ENCODE measurements at regions of chr18 and their contacts with region 1.

Region 1: GRCh38 chr18:74495581-74496507 is at the start of gene CNDP2:
- DNase-seq: peak; percentile 99
- H3K4me3 ChIP-seq: peak within 1 kb of the TSS; percentile 52 to 89 (median 74)
- H3K27ac ChIP-seq: peak within 1 kb of the TSS; percentile 59
- H3K4me1 ChIP-seq: peaks cover 11% of the 10 kb centered on the region
- H3K27me3 ChIP-seq: peaks cover 12 to 20% of the 10 kb centered on the region in 2 experiments
- CTCF ChIP-seq: no peak
- POLR2A ChIP-seq: peak; percentile 45
- total RNA-seq, gene CNDP2: 121 and 123 TPM in 2 replicates

Region 2: GRCh38 chr18:74147779-74148542 is 347.9 kb before region 1 on chr18 and contains the starts of genes FBXO15 and TIMM21:
- CTCF ChIA-PET with region 1: no interaction called
- POLR2A ChIA-PET with region 1: no interaction called
- dilution Hi-C with region 1: no loop called
- intact Hi-C with region 1: loop called (anchors 1 kb)
- DNase-seq: peak; percentile 99
- H3K4me3 ChIP-seq: peak within 1 kb of the TSS; percentile 79 to 95 (median 85)
- H3K27ac ChIP-seq: peak within 1 kb of the TSS; percentile 47
- H3K4me1 ChIP-seq: peaks cover 17% of the 10 kb centered on the region
- H3K27me3 ChIP-seq: no peaks in the 10 kb centered on the region
- CTCF ChIP-seq: no peak
- POLR2A ChIP-seq: peak; percentile 81
- total RNA-seq, gene FBXO15: not detected in 2 replicates
- total RNA-seq, gene TIMM21: 36.7 and 38.9 TPM in 2 replicates

Region 3: GRCh38 chr18:74291771-74292540 is 203.9 kb before region 1 on chr18 and contains the start of gene CYB5A:
- CTCF ChIA-PET with region 1: no interaction called
- POLR2A ChIA-PET with region 1: no interaction called
- dilution Hi-C with region 1: no loop called
- intact Hi-C with region 1: loop called (anchors 1 kb)
- DNase-seq: peak; percentile 97
- H3K4me3 ChIP-seq: peak within 1 kb of the TSS; percentile 61 to 79 (median 62)
- H3K27ac ChIP-seq: no peak within 1 kb of the TSS
- H3K4me1 ChIP-seq: peaks cover 6% of the 10 kb centered on the region
- H3K27me3 ChIP-seq: no peaks in the 10 kb centered on the region
- CTCF ChIP-seq: peak in 1 of 2 donors; percentile 8
- POLR2A ChIP-seq: no peak
- total RNA-seq, gene CYB5A: 24.9 and 32.2 TPM in 2 replicates

Region 4: GRCh38 chr18:74353169-74353775 is 142.6 kb before region 1 on chr18:
- CTCF ChIA-PET with region 1: interaction called, 84 read pairs
- POLR2A ChIA-PET with region 1: no interaction called
- dilution Hi-C with region 1: no loop called
- intact Hi-C with region 1: loop called (anchors 1 kb)
- DNase-seq: peak; percentile 53
- H3K4me3 ChIP-seq: no peak overlapping the region
- H3K27ac ChIP-seq: no peak overlapping the region
- H3K4me1 ChIP-seq: no peaks in the 10 kb centered on the region
- H3K27me3 ChIP-seq: peaks cover 1 to 15% of the 10 kb centered on the region in 2 experiments
- CTCF ChIP-seq: peak; percentile 40 to 62
- POLR2A ChIP-seq: no peak

Region 5: DNA sequence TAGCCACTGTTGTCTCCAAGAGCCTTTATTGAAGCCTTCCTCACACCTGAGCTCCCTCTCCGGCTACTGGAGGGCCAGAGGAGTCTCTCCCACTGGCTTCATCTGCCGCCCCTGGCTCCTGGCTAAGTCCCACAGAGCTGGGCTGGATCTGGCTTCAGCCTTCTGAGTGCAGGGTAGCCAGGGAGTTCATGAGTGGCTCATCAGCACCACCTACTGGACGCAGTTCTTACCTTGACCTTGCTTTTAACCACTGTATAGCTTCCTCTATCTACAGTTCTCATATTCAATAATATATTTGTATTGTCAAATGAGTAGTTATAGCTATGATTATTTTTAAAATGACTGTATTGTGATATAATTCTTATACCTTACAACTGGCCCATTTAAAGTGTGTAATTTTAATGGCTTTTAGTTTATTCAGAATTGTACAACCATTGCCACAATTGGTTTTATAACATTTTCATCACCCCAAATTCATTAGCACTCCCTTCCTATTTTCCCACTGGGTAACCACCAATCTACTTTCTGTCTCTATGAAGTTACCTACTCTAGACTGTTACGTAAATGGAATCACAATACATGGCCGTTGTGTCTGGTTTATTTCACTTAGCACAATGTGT is 56.2 kb after region 1 on chr18:
- CTCF ChIA-PET with region 1: interaction called, 12 read pairs
- POLR2A ChIA-PET with region 1: no interaction called
- dilution Hi-C with region 1: no loop called
- intact Hi-C with region 1: no loop called
- DNase-seq: peak; percentile 77
- H3K4me3 ChIP-seq: no peak overlapping the region
- H3K27ac ChIP-seq: no peak overlapping the region
- H3K4me1 ChIP-seq: no peaks in the 10 kb centered on the region
- H3K27me3 ChIP-seq: peaks cover 0 to 4% of the 10 kb centered on the region in 2 experiments
- CTCF ChIP-seq: peak; percentile 70 to 83
- POLR2A ChIP-seq: no peak

Region 6: DNA sequence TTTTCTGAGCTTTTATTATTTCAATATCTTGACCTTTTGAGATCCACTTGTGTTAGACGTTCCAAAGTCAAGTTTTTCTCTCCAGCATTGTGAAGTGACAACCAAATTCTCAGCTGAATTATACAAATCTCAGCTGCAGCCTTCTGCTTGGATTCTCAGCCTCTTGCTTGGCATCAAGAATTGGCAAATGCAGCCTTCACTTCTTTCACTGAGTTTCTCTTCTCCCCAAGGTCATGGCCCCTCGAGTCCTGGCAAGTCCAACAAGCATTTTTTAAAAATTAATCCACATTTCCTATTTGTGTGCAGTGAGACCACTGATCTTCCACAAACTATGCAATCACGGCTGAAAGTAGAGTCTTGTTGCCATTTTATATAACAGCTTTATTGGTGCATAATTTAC is 955.1 kb after region 1 on chr18:
- CTCF ChIA-PET with region 1: no interaction called
- POLR2A ChIA-PET with region 1: no interaction called
- dilution Hi-C with region 1: no loop called
- intact Hi-C with region 1: no loop called
- DNase-seq: no peak
- H3K4me3 ChIP-seq: no peak overlapping the region
- H3K27ac ChIP-seq: no peak overlapping the region
- H3K4me1 ChIP-seq: peaks cover 2% of the 10 kb centered on the region
- H3K27me3 ChIP-seq: peaks cover 1 to 3% of the 10 kb centered on the region in 2 experiments
- CTCF ChIP-seq: no peak
- POLR2A ChIP-seq: no peak

Region 7: GRCh38 chr18:76349067-76349715 is 1853.3 kb after region 1 on chr18:
- CTCF ChIA-PET with region 1: no interaction called
- POLR2A ChIA-PET with region 1: no interaction called
- dilution Hi-C with region 1: no loop called
- intact Hi-C with region 1: loop called (anchors 2 kb)
- DNase-seq: peak; percentile 59
- H3K4me3 ChIP-seq: no peak overlapping the region
- H3K27ac ChIP-seq: no peak overlapping the region
- H3K4me1 ChIP-seq: no peaks in the 10 kb centered on the region
- H3K27me3 ChIP-seq: no peaks in the 10 kb centered on the region
- CTCF ChIP-seq: peak; percentile 79 to 83
- POLR2A ChIP-seq: no peak

Measured in endothelial cell of umbilical vein (primary cell).